Activated CD8-positive, alpha-beta T cell treated with anti-CD3 and anti-CD28 coated beads, Interleukin-2, amount 10 ng/mL, durations not matched to agents 7 days and 5 days (primary cell): ENCODE measurements at regions of chr2 and their contacts with region 1.

Region 1: GRCh38 chr2:68062680-68063387 is at the start of gene C1D:
- DNase-seq: peak; percentile 94
- ATAC-seq: peak; percentile 93
- H3K4me3 Mint-ChIP-seq: peak within 1 kb of the TSS; percentile 95
- H3K27ac Mint-ChIP-seq: peak within 1 kb of the TSS; percentile 98
- H3K4me1 Mint-ChIP-seq: peaks cover 21% of the 10 kb centered on the region
- H3K27me3 Mint-ChIP-seq: peaks cover 15% of the 10 kb centered on the region
- total RNA-seq, gene C1D: 18.7 to 23.3 TPM

Region 2: DNA sequence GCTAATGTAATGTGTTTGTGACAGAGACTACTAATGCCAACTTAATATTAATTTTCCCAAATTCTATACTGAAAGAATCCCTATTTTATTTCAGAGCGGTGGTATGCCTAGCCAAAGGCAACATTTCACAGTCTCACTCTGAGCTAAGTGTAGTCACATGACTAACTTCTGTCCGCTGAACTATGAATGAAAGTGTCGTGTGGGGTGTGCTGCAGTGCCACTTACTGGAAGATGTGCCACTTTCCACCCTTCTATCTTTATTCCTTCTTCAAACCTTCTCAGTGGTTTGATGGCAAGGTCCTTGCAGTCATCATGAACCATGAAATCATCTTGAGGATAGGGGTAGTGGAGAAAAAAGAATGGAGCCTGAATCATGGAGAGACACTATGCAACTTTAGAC is 47.3 kb after region 1 on chr2:
- CTCF ChIA-PET with region 1: no interaction called
- POLR2A ChIA-PET with region 1: no interaction called
- DNase-seq: no peak
- ATAC-seq: no peak
- H3K4me3 Mint-ChIP-seq: no peak overlapping the region
- H3K27ac Mint-ChIP-seq: no peak overlapping the region
- H3K4me1 Mint-ChIP-seq: no peaks in the 10 kb centered on the region
- H3K27me3 Mint-ChIP-seq: no peaks in the 10 kb centered on the region

Region 3: GRCh38 chr2:68157402-68158133 is 94.7 kb after region 1 on chr2 and contains the start of gene PNO1:
- CTCF ChIA-PET with region 1: no interaction called
- POLR2A ChIA-PET with region 1: interaction called, 11 read pairs
- DNase-seq: peak; percentile 97
- ATAC-seq: peak; percentile 93
- H3K4me3 Mint-ChIP-seq: peak within 1 kb of the TSS; percentile 95
- H3K27ac Mint-ChIP-seq: peak within 1 kb of the TSS; percentile 99
- H3K4me1 Mint-ChIP-seq: peaks cover 37% of the 10 kb centered on the region
- H3K27me3 Mint-ChIP-seq: no peaks in the 10 kb centered on the region
- total RNA-seq, gene PNO1: 12.3 to 13.3 TPM